ENCODE measurements at regions of chr9 and their contacts with region 1.

Region 1: GRCh38 chr9:22052376-22052945 is 43.4 kb upstream of the CDKN2B start:
- DNase-seq: no peak
- ATAC-seq: no peak
- H3K4me3 ChIP-seq: no peak overlapping the region
- H3K27ac ChIP-seq: no peak overlapping the region
- H3K4me1 ChIP-seq: peaks cover 0 to 29% (median 0%) of the 10 kb centered on the region in 9 donors
- H3K27me3 ChIP-seq: no peaks in the 10 kb centered on the region
- CTCF ChIP-seq: no peak

Region 2: DNA sequence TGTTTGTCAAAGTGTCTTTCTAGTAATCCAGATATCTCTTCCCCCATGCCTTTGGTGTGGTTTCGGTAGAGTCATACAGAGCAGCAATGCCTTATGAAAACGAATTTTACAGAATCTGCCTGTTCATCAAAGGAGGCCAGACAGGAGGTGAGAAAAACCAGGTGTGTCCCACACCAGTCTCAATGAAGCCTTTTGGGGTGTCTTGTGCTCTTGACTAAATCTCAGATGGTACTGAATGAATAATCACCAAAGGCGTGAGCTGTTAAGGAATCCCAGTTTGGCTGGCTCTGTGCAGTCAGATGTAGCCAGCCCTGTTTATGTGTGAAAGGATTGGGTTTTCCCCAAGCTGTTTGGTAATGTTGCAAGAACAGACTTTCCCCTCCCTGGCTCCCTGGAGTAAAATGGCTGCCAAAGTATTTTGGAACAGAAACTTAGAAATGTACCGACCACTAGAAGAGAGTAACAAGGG is 27.4 kb after region 1 on chr9:
- intact Hi-C with region 1: loop called in 1 of 10 experiments (anchors 2 kb)
- DNase-seq: peak in 1 of 2 donors; percentile 12
- ATAC-seq: peak in 7 of 8 donors; percentile 65 to 96 (median 82)
- H3K4me3 ChIP-seq: no peak overlapping the region
- H3K27ac ChIP-seq: peak overlapping the region in 1 of 10 donors; percentile 21
- H3K4me1 ChIP-seq: peaks cover 0 to 4% (median 0%) of the 10 kb centered on the region in 9 donors
- H3K27me3 ChIP-seq: no peaks in the 10 kb centered on the region
- CTCF ChIP-seq: no peak

Region 3: DNA sequence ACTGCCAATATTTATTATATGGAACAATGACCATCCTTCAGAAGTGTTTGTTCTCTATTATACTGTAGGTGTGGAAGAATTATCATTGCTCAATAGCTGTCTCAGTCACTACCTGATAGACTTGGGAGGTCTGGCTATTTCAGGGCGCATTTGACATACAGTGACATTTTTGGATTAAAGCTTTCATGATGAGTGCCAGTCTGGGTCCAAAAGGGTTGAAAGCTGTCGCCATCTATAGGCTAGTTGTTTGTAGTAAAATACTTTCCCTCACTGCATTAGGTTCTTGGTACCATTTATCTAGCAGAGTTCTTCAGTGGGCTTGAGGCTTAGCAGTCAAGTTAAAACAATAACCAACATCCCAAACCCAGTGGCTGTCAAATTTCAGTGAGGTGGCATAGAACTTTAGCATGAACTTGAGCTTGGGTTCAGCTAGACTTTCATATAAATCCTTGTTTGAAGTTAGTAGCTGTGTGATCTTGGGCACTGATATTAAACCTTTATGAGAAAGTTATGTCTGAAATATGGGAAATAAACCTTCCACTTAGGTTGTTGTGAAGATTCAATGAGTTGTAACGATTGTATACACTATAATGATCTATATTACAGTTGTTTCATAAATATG is 67.2 kb after region 1 on chr9:
- intact Hi-C with region 1: loop called in 1 of 10 experiments (anchors 10 kb)
- DNase-seq: no peak
- ATAC-seq: peak in 6 of 8 donors; percentile 27 to 77 (median 50)
- H3K4me3 ChIP-seq: no peak overlapping the region
- H3K27ac ChIP-seq: no peak overlapping the region
- H3K4me1 ChIP-seq: peaks cover 0 to 10% (median 0%) of the 10 kb centered on the region in 9 donors
- H3K27me3 ChIP-seq: peaks cover 0 to 3% (median 0%) of the 10 kb centered on the region in 7 donors
- CTCF ChIP-seq: peak in 7 of 9 donors; percentile 32 to 55 (median 45)

Region 4: GRCh38 chr9:22141906-22142305 is 89.4 kb after region 1 on chr9:
- intact Hi-C with region 1: no loop called
- DNase-seq: peak in 1 of 2 donors; percentile 37
- ATAC-seq: peak in 7 of 8 donors; percentile 64 to 90 (median 81)
- H3K4me3 ChIP-seq: no peak overlapping the region
- H3K27ac ChIP-seq: no peak overlapping the region
- H3K4me1 ChIP-seq: peaks cover 0 to 28% (median 0%) of the 10 kb centered on the region in 9 donors
- H3K27me3 ChIP-seq: no peaks in the 10 kb centered on the region
- CTCF ChIP-seq: no peak

Region 5: GRCh38 chr9:22238809-22239684 is 186.6 kb after region 1 on chr9:
- intact Hi-C with region 1: loop called in 1 of 10 experiments (anchors 10 kb)
- DNase-seq: no peak
- ATAC-seq: peak in 1 of 8 donors; percentile 46
- H3K4me3 ChIP-seq: no peak overlapping the region
- H3K27ac ChIP-seq: no peak overlapping the region
- H3K4me1 ChIP-seq: peaks cover 0 to 27% (median 0%) of the 10 kb centered on the region in 9 donors
- H3K27me3 ChIP-seq: no peaks in the 10 kb centered on the region
- CTCF ChIP-seq: peak in 8 of 9 donors; percentile 16 to 66 (median 56)